ENCODE measurements at regions of chr9 and their contacts with region 1.

Region 1: GRCh38 chr9:13427587-13427986 is 148.1 kb upstream of the MPDZ start:
- DNase-seq: no peak
- H3K4me3 Mint-ChIP-seq: no peak overlapping the region
- H3K27ac Mint-ChIP-seq: no peak overlapping the region
- H3K4me1 Mint-ChIP-seq: no peaks in the 10 kb centered on the region
- H3K27me3 Mint-ChIP-seq: no peaks in the 10 kb centered on the region

Region 2: GRCh38 chr9:14353222-14354056 is 925.9 kb after region 1 on chr9:
- intact Hi-C with region 1: loop called (anchors 1 kb)
- DNase-seq: peak; percentile 61
- H3K4me3 Mint-ChIP-seq: no peak overlapping the region
- H3K27ac Mint-ChIP-seq: no peak overlapping the region
- H3K4me1 Mint-ChIP-seq: peaks cover 4% of the 10 kb centered on the region
- H3K27me3 Mint-ChIP-seq: peaks cover 48% of the 10 kb centered on the region

Region 3: DNA sequence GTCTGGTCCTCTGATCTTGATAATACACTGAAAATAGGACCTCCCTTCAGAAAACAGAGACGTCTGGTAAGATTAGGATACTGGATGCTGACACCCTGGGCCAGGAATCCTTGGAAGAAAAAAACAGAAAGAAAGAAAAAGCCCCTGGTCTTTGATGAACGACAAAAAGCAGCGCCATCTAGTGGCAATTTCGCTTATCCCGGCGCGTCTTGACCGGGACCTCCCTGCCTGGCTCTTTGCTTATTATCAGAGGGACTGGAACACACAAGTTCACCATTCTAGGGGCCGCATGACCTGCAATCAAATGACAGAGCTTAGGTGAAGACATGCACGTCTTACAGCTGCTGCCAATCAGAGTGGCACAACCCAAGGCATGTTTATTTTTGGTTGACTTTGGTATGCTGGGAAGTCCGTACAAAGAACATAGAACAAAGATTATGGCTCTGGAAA is 1001.2 kb after region 1 on chr9:
- intact Hi-C with region 1: loop called (anchors 2 kb)
- DNase-seq: no peak
- H3K4me3 Mint-ChIP-seq: no peak overlapping the region
- H3K27ac Mint-ChIP-seq: no peak overlapping the region
- H3K4me1 Mint-ChIP-seq: no peaks in the 10 kb centered on the region
- H3K27me3 Mint-ChIP-seq: peaks cover 4% of the 10 kb centered on the region

Measured in activated T-helper 2 cell treated with anti-CD3 and anti-CD28 coated beads, Interferon-gamma antibody, Interleukin-2, Interleukin-4, amounts not matched to agents 10 μg/mL and 5 μg/mL and 100 μg/mL, durations not matched to agents 14 hours and 24 hours and 36 hours (primary cell).